Pancreas (tissue), 10 donors: ENCODE measurements at regions of chr7 and their contacts with region 1.

Region 1: GRCh38 chr7:131654668-131655326 is 98.4 kb upstream of the PODXL start:
- DNase-seq: peak; percentile 70 to 99 (median 87)
- ATAC-seq: peak; percentile 97 to 99 (median 98)
- H3K4me3 ChIP-seq: no peak overlapping the region
- H3K27ac ChIP-seq: no peak overlapping the region
- H3K4me1 ChIP-seq: no peaks in the 10 kb centered on the region
- H3K27me3 ChIP-seq: no peaks in the 10 kb centered on the region
- CTCF ChIP-seq: peak; percentile 81 to 91 (median 88)

Region 2: DNA sequence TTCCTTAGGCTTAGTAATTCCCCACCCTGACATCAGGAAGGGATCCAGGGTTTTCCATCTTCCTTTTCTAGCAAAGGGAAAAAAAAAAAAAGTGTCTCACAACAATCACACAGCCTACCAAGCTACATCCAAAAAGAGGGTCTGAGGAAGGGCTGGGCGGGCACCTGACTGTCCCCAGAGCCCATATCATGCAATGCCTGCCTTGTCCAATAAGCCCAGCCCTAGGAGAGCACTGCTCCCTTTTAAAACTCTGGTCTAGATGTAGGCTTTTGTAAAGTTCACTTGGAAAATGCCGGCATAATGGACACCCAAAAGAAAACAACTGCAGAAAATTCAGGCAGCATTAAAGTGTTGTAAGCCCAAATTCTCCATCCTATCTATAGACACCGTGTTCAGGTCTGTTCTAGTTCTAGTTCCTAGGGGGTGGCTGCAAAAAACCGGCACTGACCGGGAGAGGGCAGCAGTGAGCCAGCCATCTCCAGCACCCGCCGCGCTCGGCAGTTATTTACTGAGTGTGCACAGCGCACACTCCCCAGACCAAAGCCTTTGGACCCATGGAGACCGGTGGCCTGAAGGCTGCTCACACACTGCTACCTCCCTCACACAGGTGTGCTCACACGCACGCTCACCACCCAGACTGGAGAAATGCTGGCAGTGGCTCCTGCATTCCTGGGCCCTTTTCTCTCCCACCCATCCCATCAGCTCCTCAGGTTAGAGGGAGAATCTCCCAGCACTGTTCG is 147.0 kb before region 1 on chr7:
- intact Hi-C with region 1: loop called (anchors 5 to 10 kb)
- DNase-seq: peak; percentile 75 to 96 (median 87)
- ATAC-seq: peak; percentile 76 to 90 (median 88)
- H3K4me3 ChIP-seq: no peak overlapping the region
- H3K27ac ChIP-seq: no peak overlapping the region
- H3K4me1 ChIP-seq: peaks cover 0 to 6% (median 0%) of the 10 kb centered on the region in 3 donors
- H3K27me3 ChIP-seq: no peaks in the 10 kb centered on the region
- CTCF ChIP-seq: peak; percentile 82 to 95 (median 88)

Region 3: GRCh38 chr7:131774419-131775220 is 119.8 kb after region 1 on chr7:
- intact Hi-C with region 1: no loop called
- DNase-seq: no peak
- ATAC-seq: no peak
- H3K4me3 ChIP-seq: no peak overlapping the region
- H3K27ac ChIP-seq: no peak overlapping the region
- H3K4me1 ChIP-seq: no peaks in the 10 kb centered on the region
- H3K27me3 ChIP-seq: no peaks in the 10 kb centered on the region
- CTCF ChIP-seq: no peak